Naive thymus-derived CD4-positive, alpha-beta T cell (primary cell): ENCODE measurements at regions of chr10 and their contacts with region 1.

Region 1: DNA sequence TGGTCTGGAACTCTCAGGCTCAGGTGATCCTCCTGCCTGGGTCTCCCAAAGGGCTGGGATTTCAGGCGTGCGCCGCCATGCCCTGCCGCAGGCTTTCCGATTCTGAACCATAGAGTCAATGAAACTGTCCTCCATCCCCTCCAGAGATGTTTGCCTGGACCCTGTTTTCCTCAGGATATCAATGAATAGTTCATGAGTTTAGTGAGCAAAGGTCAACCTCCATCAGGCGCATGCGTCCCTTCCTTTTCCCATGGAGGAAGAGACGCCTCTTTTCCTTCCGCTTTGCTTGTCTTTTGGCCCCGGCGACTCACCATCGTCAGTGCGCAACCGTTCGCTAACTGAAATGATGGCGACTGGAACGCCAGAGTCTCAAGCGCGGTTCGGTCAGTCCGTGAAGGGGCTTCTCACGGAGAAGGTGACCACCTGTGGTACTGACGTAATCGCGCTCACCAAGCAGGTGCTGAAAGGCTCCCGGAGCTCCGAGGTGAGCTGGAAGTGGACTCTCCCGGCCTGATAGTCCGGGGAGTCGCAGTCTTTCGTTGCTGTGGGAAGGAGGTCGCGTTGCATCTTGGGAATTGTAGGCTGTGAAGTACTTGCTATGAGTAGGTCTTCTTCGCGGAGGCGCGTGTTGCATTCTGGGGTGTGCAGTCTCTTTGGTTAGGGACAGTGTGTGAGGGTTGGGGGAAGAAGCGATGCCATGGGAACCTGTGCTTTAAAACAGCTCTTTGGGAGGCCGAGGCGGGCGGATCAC is at the start of gene BORCS7:
- DNase-seq: peak; percentile 69 to 91 (median 88)
- ATAC-seq: peak; percentile 100
- H3K4me3 ChIP-seq: peak within 1 kb of the TSS; percentile 100
- H3K4me3 Mint-ChIP-seq: peak within 1 kb of the TSS; percentile 84 to 99 (median 91)
- H3K27ac ChIP-seq: peak within 1 kb of the TSS; percentile 95
- H3K27ac Mint-ChIP-seq: peak within 1 kb of the TSS; percentile 96 to 99 (median 99)
- H3K4me1 ChIP-seq: no peaks in the 10 kb centered on the region
- H3K4me1 Mint-ChIP-seq: peaks cover 7 to 25% (median 15%) of the 10 kb centered on the region in 7 donors
- H3K27me3 ChIP-seq: no peaks in the 10 kb centered on the region
- H3K27me3 Mint-ChIP-seq: no peaks in the 10 kb centered on the region
- total RNA-seq, gene BORCS7: 11.6 to 20.2 (median 13.3) TPM

Region 2: DNA sequence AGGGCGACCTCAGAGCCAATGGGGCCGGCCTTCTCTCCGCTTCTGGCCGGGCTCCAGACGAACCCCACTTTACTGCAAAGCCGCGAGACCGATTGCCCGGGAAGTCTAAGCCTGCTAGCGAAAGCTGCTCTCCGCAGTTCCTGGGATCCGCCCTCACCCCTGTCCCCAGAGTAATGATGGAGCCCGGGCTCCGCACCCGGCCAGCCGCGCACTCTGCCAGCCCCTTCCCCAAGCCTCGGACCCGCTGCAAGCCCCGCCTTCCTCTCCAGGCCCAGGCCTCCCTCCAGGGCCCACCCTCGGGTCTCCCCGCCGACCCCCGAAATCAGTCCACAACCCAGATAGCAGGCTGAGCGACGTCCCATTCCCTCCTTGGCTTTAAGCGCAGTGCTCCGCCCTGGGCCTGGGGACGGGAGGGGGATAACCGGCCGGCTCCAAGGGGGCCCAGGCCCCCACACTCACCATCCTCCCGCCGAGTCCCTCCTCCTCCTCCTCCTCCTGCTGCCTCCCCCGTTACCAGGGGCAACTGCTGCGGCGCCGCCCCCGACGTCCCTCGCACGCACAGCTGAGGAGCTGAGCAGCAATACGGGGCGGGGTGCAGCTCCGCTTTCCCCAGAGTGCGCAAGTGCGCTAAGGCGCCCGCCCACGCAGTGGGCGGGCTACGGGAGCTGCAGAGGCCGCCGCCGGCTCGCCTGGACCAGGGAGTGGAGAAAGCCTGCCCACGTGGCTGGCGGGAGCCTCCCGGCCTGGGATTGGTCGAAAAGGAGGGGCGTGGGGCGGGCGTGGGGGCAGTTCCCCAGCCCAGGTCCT is 140.1 kb before region 1 on chr10 and contains the start of gene ARL3:
- CTCF ChIA-PET with region 1: no interaction called
- POLR2A ChIA-PET with region 1: no interaction called
- intact Hi-C with region 1: loop called (anchors 1 kb)
- DNase-seq: peak; percentile 75 to 95 (median 89)
- ATAC-seq: peak; percentile 96
- H3K4me3 ChIP-seq: peak within 1 kb of the TSS; percentile 98
- H3K4me3 Mint-ChIP-seq: peak within 1 kb of the TSS; percentile 86 to 98 (median 94)
- H3K27ac ChIP-seq: peak within 1 kb of the TSS; percentile 92
- H3K27ac Mint-ChIP-seq: peak within 1 kb of the TSS; percentile 66 to 95 (median 90)
- H3K4me1 ChIP-seq: peaks cover 4 to 18% of the 10 kb centered on the region in 2 donors
- H3K4me1 Mint-ChIP-seq: peaks cover 26 to 52% (median 43%) of the 10 kb centered on the region in 7 donors
- H3K27me3 ChIP-seq: no peaks in the 10 kb centered on the region
- H3K27me3 Mint-ChIP-seq: no peaks in the 10 kb centered on the region
- total RNA-seq, gene ARL3: 1.3 to 5.1 (median 2.9) TPM

Region 3: GRCh38 chr10:103192451-103193106 is 338.5 kb after region 1 on chr10:
- CTCF ChIA-PET with region 1: interaction called, 3 read pairs
- POLR2A ChIA-PET with region 1: no interaction called
- intact Hi-C with region 1: loop called (anchors 1 kb)
- DNase-seq: peak; percentile 36 to 76 (median 63)
- ATAC-seq: peak; percentile 60
- H3K4me3 ChIP-seq: peak overlapping the region; percentile 85
- H3K4me3 Mint-ChIP-seq: peak overlapping the region; percentile 91 to 100 (median 98)
- H3K27ac ChIP-seq: peak overlapping the region; percentile 97
- H3K27ac Mint-ChIP-seq: peak overlapping the region; percentile 81 to 100 (median 95)
- H3K4me1 ChIP-seq: peaks cover 6 to 21% of the 10 kb centered on the region in 2 donors
- H3K4me1 Mint-ChIP-seq: peaks cover 36 to 48% (median 44%) of the 10 kb centered on the region in 7 donors
- H3K27me3 ChIP-seq: no peaks in the 10 kb centered on the region
- H3K27me3 Mint-ChIP-seq: no peaks in the 10 kb centered on the region

Region 4: GRCh38 chr10:103367782-103368518 is 513.8 kb after region 1 on chr10 and contains the start of gene TAF5:
- CTCF ChIA-PET with region 1: no interaction called
- POLR2A ChIA-PET with region 1: no interaction called
- intact Hi-C with region 1: loop called in 1 of 2 experiments (anchors 1 kb)
- DNase-seq: peak; percentile 70 to 94 (median 90)
- ATAC-seq: peak; percentile 88
- H3K4me3 ChIP-seq: peak within 1 kb of the TSS; percentile 58
- H3K4me3 Mint-ChIP-seq: peak within 1 kb of the TSS; percentile 92 to 99 (median 96)
- H3K27ac ChIP-seq: peak within 1 kb of the TSS; percentile 77
- H3K27ac Mint-ChIP-seq: peak within 1 kb of the TSS; percentile 84 to 98 (median 94)
- H3K4me1 ChIP-seq: peaks cover 4 to 11% of the 10 kb centered on the region in 2 donors
- H3K4me1 Mint-ChIP-seq: peaks cover 0 to 35% (median 23%) of the 10 kb centered on the region in 7 donors
- H3K27me3 ChIP-seq: no peaks in the 10 kb centered on the region
- H3K27me3 Mint-ChIP-seq: no peaks in the 10 kb centered on the region
- total RNA-seq, gene TAF5: 4.7 to 8.9 (median 7.1) TPM

Region 5: DNA sequence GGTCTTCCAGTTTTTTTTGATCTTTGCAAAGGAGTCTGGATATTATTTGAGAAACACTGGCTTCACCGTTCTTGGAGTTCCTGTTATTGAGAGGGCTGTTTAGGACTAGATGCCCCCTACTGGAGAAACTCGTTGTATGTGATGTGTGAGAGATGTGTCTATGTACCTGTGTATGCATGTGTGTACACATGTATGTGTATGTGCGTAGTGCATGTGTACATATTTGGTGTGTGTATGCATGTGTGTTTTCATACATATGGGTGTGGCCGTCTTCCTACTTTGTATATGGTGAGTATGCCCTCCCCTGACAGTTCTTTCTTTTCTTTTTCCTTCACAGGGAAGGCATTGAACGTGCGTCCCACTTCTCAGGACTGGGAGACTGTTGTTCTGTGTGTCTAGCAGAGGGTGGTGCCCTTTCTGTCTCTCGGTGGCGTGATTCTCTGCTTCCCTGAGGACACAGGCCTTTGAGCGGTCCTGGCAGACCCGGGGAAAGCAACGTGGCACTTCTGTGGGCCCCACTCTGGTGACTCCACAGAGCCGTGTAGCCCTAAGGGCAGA is 627.9 kb after region 1 on chr10:
- CTCF ChIA-PET with region 1: no interaction called
- POLR2A ChIA-PET with region 1: no interaction called
- intact Hi-C with region 1: loop called in 1 of 2 experiments (anchors 5 kb)
- DNase-seq: peak in 7 of 9 donors; percentile 41 to 69 (median 57)
- ATAC-seq: peak; percentile 79
- H3K4me3 ChIP-seq: no peak overlapping the region
- H3K4me3 Mint-ChIP-seq: no peak overlapping the region
- H3K27ac ChIP-seq: no peak overlapping the region
- H3K27ac Mint-ChIP-seq: no peak overlapping the region
- H3K4me1 ChIP-seq: no peaks in the 10 kb centered on the region
- H3K4me1 Mint-ChIP-seq: peaks cover 0 to 27% (median 4%) of the 10 kb centered on the region in 7 donors
- H3K27me3 ChIP-seq: no peaks in the 10 kb centered on the region
- H3K27me3 Mint-ChIP-seq: peaks cover 0 to 6% (median 0%) of the 10 kb centered on the region in 5 donors